ENCODE measurements at regions of chr14 and their contacts with region 1.

Region 1: DNA sequence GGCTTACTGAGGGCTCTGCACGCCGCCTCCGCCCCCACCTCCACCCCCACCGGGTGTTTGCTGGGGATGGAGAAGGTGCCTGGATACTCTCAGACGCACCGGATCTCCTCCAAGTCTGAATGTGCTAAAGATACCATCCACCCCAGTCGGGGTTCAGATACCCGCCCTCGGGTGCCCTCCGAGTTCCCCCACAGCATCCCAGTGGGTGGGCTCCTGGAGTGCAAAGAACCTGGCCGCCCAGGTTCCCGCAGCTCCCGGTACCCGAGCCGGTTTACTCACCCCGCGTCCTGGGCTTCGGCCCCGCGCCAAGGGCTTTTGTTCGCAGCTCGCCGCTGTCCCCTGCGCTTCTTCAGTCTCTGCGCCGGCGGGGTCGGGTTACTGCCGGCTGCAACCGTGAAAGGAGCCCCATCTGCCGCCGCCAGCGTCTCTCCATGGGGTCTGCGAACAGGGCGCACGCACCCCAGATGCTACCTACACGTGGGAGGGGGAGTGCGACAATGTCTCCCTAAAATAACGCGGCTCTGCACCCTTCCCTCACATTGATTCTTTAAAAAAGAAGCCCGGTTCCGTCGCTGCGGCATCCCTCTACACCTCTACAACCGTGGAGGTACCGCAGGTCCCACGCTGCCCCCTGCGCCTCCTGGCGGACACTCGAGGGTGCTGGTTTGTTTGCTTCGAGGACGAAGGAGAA is at the start of gene CCDC177:
- DNase-seq: peak in 1 of 2 experiments; percentile 85
- H3K4me3 ChIP-seq: peak within 1 kb of the TSS; percentile 51 to 68 (median 62)
- H3K27ac ChIP-seq: no peak within 1 kb of the TSS
- H3K4me1 ChIP-seq: peaks cover 0 to 9% (median 7%) of the 10 kb centered on the region in 4 experiments; a peak in 4 of 7 replicates
- H3K27me3 ChIP-seq: peaks cover 24 to 48% (median 39%) of the 10 kb centered on the region in 4 experiments
- CTCF ChIP-seq: peak; percentile 77 to 87 (median 81)
- EP300 ChIP-seq: no peak
- POLR2A ChIP-seq: no peak
- RAD21 ChIP-seq: peak; percentile 62 to 67
- total RNA-seq, gene CCDC177: 2.8 and 2.9 TPM in 2 replicates

Region 2: GRCh38 chr14:69535230-69535848 is 39.1 kb before region 1 on chr14:
- CTCF ChIA-PET with region 1: interaction called, 79 read pairs
- POLR2A ChIA-PET with region 1: interaction called, 3 read pairs
- DNase-seq: peak in 1 of 2 experiments; percentile 71
- H3K4me3 ChIP-seq: no peak overlapping the region
- H3K27ac ChIP-seq: no peak overlapping the region
- H3K4me1 ChIP-seq: no peaks in the 10 kb centered on the region
- H3K27me3 ChIP-seq: no peaks in the 10 kb centered on the region
- CTCF ChIP-seq: peak; percentile 73 to 91 (median 83)
- EP300 ChIP-seq: no peak
- POLR2A ChIP-seq: no peak
- RAD21 ChIP-seq: peak; percentile 83 to 85

Region 3: GRCh38 chr14:69543341-69544249 is 30.8 kb before region 1 on chr14:
- CTCF ChIA-PET with region 1: interaction called, 96 read pairs
- POLR2A ChIA-PET with region 1: interaction called, 12 read pairs
- DNase-seq: no peak
- H3K4me3 ChIP-seq: no peak overlapping the region
- H3K27ac ChIP-seq: no peak overlapping the region
- H3K4me1 ChIP-seq: peaks cover 0 to 6% (median under 1%) of the 10 kb centered on the region in 4 experiments; a peak in 4 of 7 replicates
- H3K27me3 ChIP-seq: no peaks in the 10 kb centered on the region; a peak in 3 of 7 replicates
- CTCF ChIP-seq: no peak
- EP300 ChIP-seq: no peak
- POLR2A ChIP-seq: no peak
- RAD21 ChIP-seq: no peak

Region 4: GRCh38 chr14:69553221-69553620 is 21.2 kb before region 1 on chr14:
- CTCF ChIA-PET with region 1: interaction called, 96 read pairs
- POLR2A ChIA-PET with region 1: interaction called, 12 read pairs
- DNase-seq: no peak
- H3K4me3 ChIP-seq: no peak overlapping the region
- H3K27ac ChIP-seq: no peak overlapping the region
- H3K4me1 ChIP-seq: peaks cover 0 to 9% (median 3%) of the 10 kb centered on the region in 4 experiments; a peak in 4 of 7 replicates
- H3K27me3 ChIP-seq: no peaks in the 10 kb centered on the region
- CTCF ChIP-seq: no peak
- EP300 ChIP-seq: no peak
- POLR2A ChIP-seq: no peak
- RAD21 ChIP-seq: no peak

Region 5: GRCh38 chr14:69559581-69560011 is 14.8 kb before region 1 on chr14:
- CTCF ChIA-PET with region 1: interaction called, 28 read pairs
- POLR2A ChIA-PET with region 1: interaction called, 14 read pairs
- DNase-seq: no peak
- H3K4me3 ChIP-seq: no peak overlapping the region
- H3K27ac ChIP-seq: no peak overlapping the region
- H3K4me1 ChIP-seq: no peaks in the 10 kb centered on the region; a peak in 1 of 7 replicates
- H3K27me3 ChIP-seq: no peaks in the 10 kb centered on the region
- CTCF ChIP-seq: no peak
- EP300 ChIP-seq: no peak
- POLR2A ChIP-seq: no peak
- RAD21 ChIP-seq: no peak

Region 6: GRCh38 chr14:69586404-69586803 is 12.0 kb after region 1 on chr14:
- CTCF ChIA-PET with region 1: interaction called, 16 read pairs
- POLR2A ChIA-PET with region 1: no interaction called
- DNase-seq: no peak
- H3K4me3 ChIP-seq: no peak overlapping the region
- H3K27ac ChIP-seq: no peak overlapping the region
- H3K4me1 ChIP-seq: no peaks in the 10 kb centered on the region; a peak in 1 of 7 replicates
- H3K27me3 ChIP-seq: no peaks in the 10 kb centered on the region
- CTCF ChIP-seq: no peak
- EP300 ChIP-seq: no peak
- POLR2A ChIP-seq: no peak
- RAD21 ChIP-seq: no peak

Region 7: DNA sequence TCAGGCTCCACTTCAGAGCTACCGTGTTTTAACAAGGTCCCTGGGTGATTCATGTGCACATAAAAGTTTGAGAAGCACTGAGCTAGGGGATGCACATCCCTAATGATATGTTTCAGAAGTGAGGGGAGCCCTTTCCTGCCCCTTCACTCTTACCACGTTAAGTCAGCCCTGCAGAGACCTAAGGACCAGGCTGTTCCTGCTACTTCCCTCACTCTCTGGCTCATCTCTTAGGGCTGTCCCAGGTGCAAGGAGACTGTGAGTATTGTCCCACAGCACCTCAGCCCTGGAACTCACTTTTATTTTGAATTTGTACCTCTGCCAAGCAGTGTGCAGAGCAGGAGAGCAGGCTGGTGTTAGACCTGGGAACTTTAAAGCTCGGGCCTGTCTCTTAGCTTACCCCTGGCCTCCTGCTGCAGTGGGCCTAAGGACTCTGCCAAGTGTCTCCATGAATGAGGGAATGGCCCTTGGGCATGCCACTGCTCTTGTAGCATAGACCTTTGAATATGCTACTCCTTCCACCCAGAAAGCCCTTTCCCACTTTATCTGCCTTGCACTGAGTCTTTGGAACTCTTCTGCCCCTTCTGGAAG is 26.0 kb after region 1 on chr14:
- CTCF ChIA-PET with region 1: interaction called, 13 read pairs
- POLR2A ChIA-PET with region 1: no interaction called
- DNase-seq: no peak
- H3K4me3 ChIP-seq: no peak overlapping the region
- H3K27ac ChIP-seq: no peak overlapping the region
- H3K4me1 ChIP-seq: peaks cover 0 to 4% (median under 1%) of the 10 kb centered on the region in 4 experiments; a peak in 2 of 7 replicates
- H3K27me3 ChIP-seq: no peaks in the 10 kb centered on the region
- CTCF ChIP-seq: no peak
- EP300 ChIP-seq: no peak
- POLR2A ChIP-seq: no peak
- RAD21 ChIP-seq: no peak

Region 8: DNA sequence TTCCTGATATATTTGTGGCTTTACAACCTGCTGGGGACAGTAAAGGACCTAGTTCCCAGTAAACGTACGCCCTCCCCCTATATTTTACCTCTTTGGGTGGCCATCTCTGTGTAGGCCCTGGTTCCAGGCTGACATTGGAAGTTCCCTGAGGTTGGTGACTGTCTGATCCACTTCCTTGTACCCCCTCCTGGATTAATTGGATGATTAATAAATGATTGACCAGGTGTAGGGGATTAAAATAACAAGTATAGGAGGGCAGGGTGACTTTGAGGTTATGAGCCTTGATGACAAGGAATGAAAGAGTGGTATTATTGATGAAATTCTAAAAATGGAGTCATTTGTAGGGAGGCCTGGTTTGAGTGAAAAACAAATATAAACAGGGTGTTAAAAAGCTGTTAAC is 46.6 kb after region 1 on chr14:
- CTCF ChIA-PET with region 1: no interaction called
- POLR2A ChIA-PET with region 1: no interaction called
- DNase-seq: no peak
- H3K4me3 ChIP-seq: no peak overlapping the region
- H3K27ac ChIP-seq: no peak overlapping the region
- H3K4me1 ChIP-seq: peaks cover 0 to 3% (median 0%) of the 10 kb centered on the region in 4 experiments; a peak in 1 of 7 replicates
- H3K27me3 ChIP-seq: no peaks in the 10 kb centered on the region
- CTCF ChIP-seq: no peak
- EP300 ChIP-seq: no peak
- POLR2A ChIP-seq: no peak
- RAD21 ChIP-seq: no peak

Region 9: DNA sequence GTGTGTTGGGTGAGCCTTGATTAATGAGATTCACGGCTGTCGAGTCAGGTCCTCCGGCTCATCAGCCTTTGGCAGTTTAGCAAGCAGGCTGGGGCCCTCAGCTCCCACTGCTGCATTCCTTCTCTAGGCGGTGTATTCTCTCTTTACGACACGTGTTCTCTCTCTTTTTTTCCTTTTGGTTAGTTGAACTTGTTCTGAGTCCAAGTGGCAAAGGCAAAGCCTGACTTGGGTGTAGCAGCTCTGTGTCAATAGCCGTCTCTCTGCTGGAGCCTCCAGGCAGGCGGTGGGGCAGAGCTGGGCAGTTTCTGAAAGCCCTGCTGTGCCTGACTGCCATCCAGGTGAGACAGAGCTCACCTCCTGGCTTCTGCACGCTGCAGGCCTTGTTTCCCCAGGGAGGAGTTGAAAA is 83.5 kb after region 1 on chr14:
- CTCF ChIA-PET with region 1: no interaction called
- POLR2A ChIA-PET with region 1: no interaction called
- DNase-seq: no peak
- H3K4me3 ChIP-seq: no peak overlapping the region
- H3K27ac ChIP-seq: no peak overlapping the region
- H3K4me1 ChIP-seq: peaks cover 13 to 19% (median 16%) of the 10 kb centered on the region in 4 experiments
- H3K27me3 ChIP-seq: no peaks in the 10 kb centered on the region
- CTCF ChIP-seq: no peak
- EP300 ChIP-seq: no peak
- POLR2A ChIP-seq: no peak
- RAD21 ChIP-seq: no peak

Region 10: DNA sequence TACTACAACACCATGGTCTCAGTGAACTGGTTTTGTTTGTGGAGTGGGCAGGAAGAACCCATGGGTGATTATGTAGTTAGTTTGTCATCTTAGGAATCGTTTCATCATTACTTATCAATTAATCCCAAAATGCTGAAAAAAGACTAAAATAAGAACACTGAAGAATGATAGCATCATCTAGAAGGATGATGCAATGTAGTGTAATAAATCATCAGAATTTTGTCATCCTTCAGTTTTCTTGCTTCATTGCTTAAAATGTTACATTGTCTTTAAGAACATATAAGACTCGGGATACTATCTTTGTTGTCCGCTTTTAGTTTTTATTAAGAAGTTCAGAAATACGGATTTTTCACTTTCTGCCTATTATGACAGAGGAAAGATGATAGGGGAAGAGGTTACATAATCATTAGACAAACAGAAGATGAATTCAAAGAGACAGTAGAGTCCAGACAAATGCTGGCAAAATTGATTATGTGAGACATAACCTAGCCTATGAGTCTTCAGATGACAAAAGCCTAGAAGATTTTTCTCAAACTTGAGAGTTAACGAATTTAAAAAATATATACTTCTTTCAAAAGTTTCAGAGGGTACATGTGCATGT is 294.1 kb after region 1 on chr14:
- CTCF ChIA-PET with region 1: no interaction called
- POLR2A ChIA-PET with region 1: no interaction called
- DNase-seq: no peak
- H3K4me3 ChIP-seq: no peak overlapping the region
- H3K27ac ChIP-seq: no peak overlapping the region
- H3K4me1 ChIP-seq: no peaks in the 10 kb centered on the region
- H3K27me3 ChIP-seq: no peaks in the 10 kb centered on the region
- CTCF ChIP-seq: no peak
- EP300 ChIP-seq: no peak
- POLR2A ChIP-seq: no peak
- RAD21 ChIP-seq: no peak

Region 11: GRCh38 chr14:70171726-70172125 is 597.3 kb after region 1 on chr14:
- CTCF ChIA-PET with region 1: no interaction called
- POLR2A ChIA-PET with region 1: no interaction called
- DNase-seq: no peak
- H3K4me3 ChIP-seq: no peak overlapping the region
- H3K27ac ChIP-seq: no peak overlapping the region
- H3K4me1 ChIP-seq: no peaks in the 10 kb centered on the region
- H3K27me3 ChIP-seq: no peaks in the 10 kb centered on the region
- CTCF ChIP-seq: no peak
- EP300 ChIP-seq: no peak
- POLR2A ChIP-seq: no peak
- RAD21 ChIP-seq: no peak

Measured in H1 (cell line).